ENCODE measurements at regions of chr5 and their contacts with region 1.

Region 1: DNA sequence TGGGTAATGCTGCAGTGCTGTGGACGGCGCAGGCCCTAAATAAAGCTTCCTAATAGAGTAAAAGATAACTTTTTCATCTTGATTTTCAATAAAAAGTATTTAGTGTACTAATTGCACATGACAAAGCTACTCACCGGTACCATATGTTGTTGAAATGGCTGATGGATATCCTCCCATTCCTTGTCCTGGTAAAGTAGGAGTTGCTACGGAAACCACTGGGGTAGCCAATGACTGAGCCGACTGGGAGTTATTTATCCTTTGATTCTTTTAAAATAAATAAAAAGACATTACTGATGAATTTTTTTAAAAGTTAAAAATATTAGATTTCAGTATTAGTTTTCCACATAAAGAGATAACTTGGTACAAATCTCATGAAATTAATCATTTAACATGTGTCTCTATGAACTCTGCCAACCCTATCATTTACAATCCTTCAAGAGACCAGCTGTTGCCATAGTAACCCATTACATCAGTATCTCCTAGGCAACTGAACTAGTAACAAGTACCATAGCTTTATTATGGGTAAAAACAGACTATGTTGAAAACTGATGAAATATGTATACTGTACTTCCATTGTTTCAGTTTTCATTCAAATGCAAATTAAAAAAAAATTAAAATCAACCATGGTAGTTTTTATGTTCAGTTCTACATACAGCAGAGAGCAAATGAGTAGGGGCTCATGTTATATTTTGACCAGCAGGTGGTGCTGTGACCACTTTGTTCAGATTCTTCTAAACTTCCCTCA is 153.7 kb downstream of the MEF2C start:
- DNase-seq: peak; percentile 73
- ATAC-seq: peak; percentile 46
- H3K4me3 ChIP-seq: no peak overlapping the region
- H3K27ac ChIP-seq: no peak overlapping the region
- H3K4me1 ChIP-seq: peaks cover 34% of the 10 kb centered on the region
- H3K27me3 ChIP-seq: no peaks in the 10 kb centered on the region
- CTCF ChIP-seq: peak; percentile 54 to 77 (median 58); a peak in 5 of 6 replicates
- EP300 ChIP-seq: no peak
- POLR2A ChIP-seq: no peak
- RAD21 ChIP-seq: peak; percentile 85

Region 2: GRCh38 chr5:88634014-88634413 is 95.2 kb before region 1 on chr5:
- CTCF ChIA-PET with region 1: no interaction called
- POLR2A ChIA-PET with region 1: no interaction called
- RAD21 ChIA-PET with region 1: no interaction called
- SMC1A ChIA-PET with region 1: no interaction called
- in situ Hi-C with region 1: no loop called
- intact Hi-C with region 1: no loop called
- DNase-seq: no peak
- ATAC-seq: no peak
- H3K4me3 ChIP-seq: no peak overlapping the region
- H3K27ac ChIP-seq: no peak overlapping the region
- H3K4me1 ChIP-seq: no peaks in the 10 kb centered on the region
- H3K27me3 ChIP-seq: peaks cover 0 to 4% of the 10 kb centered on the region in 2 experiments; a peak in 2 of 4 replicates
- CTCF ChIP-seq: no peak
- EP300 ChIP-seq: no peak
- POLR2A ChIP-seq: no peak
- RAD21 ChIP-seq: no peak

Region 3: DNA sequence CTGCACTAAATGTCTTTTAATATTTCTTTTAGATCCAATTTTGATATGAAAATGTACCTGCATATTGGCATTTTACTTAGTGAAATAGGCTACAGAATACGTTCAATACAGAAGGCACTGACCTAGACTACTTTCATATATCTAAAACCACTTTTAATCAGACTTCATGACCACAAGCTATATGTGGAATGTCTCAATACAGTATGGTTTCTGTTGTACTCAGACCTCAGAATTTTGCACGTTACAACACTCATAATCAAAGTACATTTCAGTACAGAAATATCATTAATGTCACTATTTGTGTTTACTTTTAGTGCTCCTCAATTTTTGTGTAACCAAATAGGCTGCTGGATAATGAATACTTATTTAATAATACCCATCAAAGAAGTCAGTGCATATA is 78.9 kb after region 1 on chr5:
- CTCF ChIA-PET with region 1: interaction called, 13 read pairs
- POLR2A ChIA-PET with region 1: interaction called, 4 read pairs
- RAD21 ChIA-PET with region 1: interaction called, 11 read pairs
- SMC1A ChIA-PET with region 1: interaction called, 33 read pairs
- in situ Hi-C with region 1: no loop called
- intact Hi-C with region 1: no loop called
- DNase-seq: no peak
- ATAC-seq: peak; percentile 59
- H3K4me3 ChIP-seq: no peak overlapping the region
- H3K27ac ChIP-seq: no peak overlapping the region
- H3K4me1 ChIP-seq: peaks cover 12% of the 10 kb centered on the region
- H3K27me3 ChIP-seq: no peaks in the 10 kb centered on the region
- CTCF ChIP-seq: no peak
- EP300 ChIP-seq: no peak
- POLR2A ChIP-seq: no peak
- RAD21 ChIP-seq: no peak

Region 4: GRCh38 chr5:88883059-88883835 is 154.0 kb after region 1 on chr5 and contains the start of gene MEF2C:
- CTCF ChIA-PET with region 1: interaction called, 24 read pairs
- POLR2A ChIA-PET with region 1: interaction called, 6 read pairs
- RAD21 ChIA-PET with region 1: interaction called, 99 read pairs
- SMC1A ChIA-PET with region 1: interaction called, 76 read pairs
- in situ Hi-C with region 1: no loop called
- intact Hi-C with region 1: loop called (anchors 2 kb)
- DNase-seq: no peak
- ATAC-seq: peak; percentile 45
- H3K4me3 ChIP-seq: peak within 1 kb of the TSS; percentile 85
- H3K27ac ChIP-seq: peak within 1 kb of the TSS; percentile 98
- H3K4me1 ChIP-seq: peaks cover 3% of the 10 kb centered on the region
- H3K27me3 ChIP-seq: no peaks in the 10 kb centered on the region
- CTCF ChIP-seq: no peak
- EP300 ChIP-seq: no peak
- POLR2A ChIP-seq: peak; percentile 94
- RAD21 ChIP-seq: no peak
- polyA plus RNA-seq, gene MEF2C: 143 to 147 TPM

Region 5: DNA sequence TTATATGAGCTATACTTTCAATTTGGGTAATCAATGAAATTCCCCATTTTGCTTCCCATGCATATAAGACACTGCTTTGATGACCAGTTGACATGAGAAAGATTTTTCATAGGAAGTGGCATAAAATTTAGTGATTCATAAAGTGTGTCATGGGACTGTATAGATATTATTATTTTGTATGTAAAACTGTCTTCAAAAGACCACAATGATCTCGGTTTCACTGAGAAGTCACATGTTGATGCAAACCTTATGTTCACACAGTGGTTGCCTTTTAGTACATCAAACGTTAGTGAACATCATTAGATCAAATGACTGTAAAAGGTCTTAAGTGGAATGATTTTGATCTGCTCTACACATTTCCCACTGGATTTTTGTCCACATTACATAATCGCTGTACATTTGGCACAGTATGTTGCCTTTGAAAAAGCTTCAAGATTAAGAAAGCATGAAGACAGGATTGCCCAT is 502.9 kb after region 1 on chr5:
- CTCF ChIA-PET with region 1: interaction called, 20 read pairs
- POLR2A ChIA-PET with region 1: no interaction called
- RAD21 ChIA-PET with region 1: interaction called, 19 read pairs
- SMC1A ChIA-PET with region 1: interaction called, 37 read pairs
- in situ Hi-C with region 1: no loop called
- intact Hi-C with region 1: loop called (anchors 1 kb)
- DNase-seq: peak; percentile 96
- ATAC-seq: peak; percentile 90
- H3K4me3 ChIP-seq: 0 out of 2 replicates have a peak overlapping the region, but pooled peaks have one; percentile 25
- H3K27ac ChIP-seq: peak overlapping the region; percentile 97
- H3K4me1 ChIP-seq: peaks cover 43% of the 10 kb centered on the region
- H3K27me3 ChIP-seq: no peaks in the 10 kb centered on the region
- CTCF ChIP-seq: no peak
- EP300 ChIP-seq: peak; percentile 96 to 98
- POLR2A ChIP-seq: no peak
- RAD21 ChIP-seq: no peak

Region 6: DNA sequence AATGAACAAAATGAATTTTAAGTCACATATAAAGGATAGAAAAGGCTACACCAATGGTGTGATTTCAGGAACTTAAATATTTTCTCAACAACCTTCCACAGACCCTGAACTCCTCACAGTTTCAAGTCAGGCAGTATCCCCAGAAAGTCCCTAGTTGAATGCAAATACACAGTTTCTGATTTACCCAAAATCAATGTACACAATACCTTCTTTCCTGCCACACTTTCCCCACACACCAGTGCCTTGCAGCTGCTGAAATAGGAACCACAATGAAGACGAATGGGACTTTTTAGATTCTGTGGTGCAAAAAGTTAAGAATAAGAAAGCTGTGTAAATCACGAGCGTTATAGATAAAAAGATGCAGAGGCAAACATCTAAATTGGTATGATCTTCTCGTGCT is 706.1 kb after region 1 on chr5:
- CTCF ChIA-PET with region 1: interaction called, 4 read pairs
- POLR2A ChIA-PET with region 1: no interaction called
- RAD21 ChIA-PET with region 1: interaction called, 12 read pairs
- SMC1A ChIA-PET with region 1: interaction called, 4 read pairs
- in situ Hi-C with region 1: no loop called
- intact Hi-C with region 1: loop called (anchors 5 kb)
- DNase-seq: peak; percentile 90
- ATAC-seq: peak; percentile 88
- H3K4me3 ChIP-seq: 0 out of 2 replicates have a peak overlapping the region, but pooled peaks have one; percentile 41
- H3K27ac ChIP-seq: peak overlapping the region; percentile 92
- H3K4me1 ChIP-seq: peaks cover 29% of the 10 kb centered on the region; the same call in 1 of the 2 replicates
- H3K27me3 ChIP-seq: no peaks in the 10 kb centered on the region
- CTCF ChIP-seq: 0 out of 6 replicates have a peak, but pooled peaks of 1 of the 3 experiments have one; percentile 3
- EP300 ChIP-seq: peak; percentile 50 to 87; a peak in 2 of 4 replicates
- POLR2A ChIP-seq: 0 out of 2 replicates have a peak, but pooled peaks have one; percentile 28
- RAD21 ChIP-seq: peak; percentile 53

Region 7: GRCh38 chr5:90161414-90161813 is 1432.2 kb after region 1 on chr5:
- CTCF ChIA-PET with region 1: interaction called, 14 read pairs
- POLR2A ChIA-PET with region 1: no interaction called
- RAD21 ChIA-PET with region 1: interaction called, 11 read pairs
- SMC1A ChIA-PET with region 1: interaction called, 3 read pairs
- in situ Hi-C with region 1: no loop called
- intact Hi-C with region 1: no loop called
- DNase-seq: no peak
- ATAC-seq: peak; percentile 86
- H3K4me3 ChIP-seq: no peak overlapping the region
- H3K27ac ChIP-seq: no peak overlapping the region
- H3K4me1 ChIP-seq: no peaks in the 10 kb centered on the region
- H3K27me3 ChIP-seq: no peaks in the 10 kb centered on the region
- CTCF ChIP-seq: peak; percentile 26 to 43 (median 30); a peak in 4 of 6 replicates
- EP300 ChIP-seq: no peak
- POLR2A ChIP-seq: no peak
- RAD21 ChIP-seq: peak; percentile 56